Dendritic cell treated with granulocyte-macrophage colony-stimulating factor and Interleukin-4, amounts not matched to agents 40 ng/mL and 50 ng/mL, for 4 days (primary cell): ENCODE measurements at regions of chr6 and their contacts with region 1.

Region 1: DNA sequence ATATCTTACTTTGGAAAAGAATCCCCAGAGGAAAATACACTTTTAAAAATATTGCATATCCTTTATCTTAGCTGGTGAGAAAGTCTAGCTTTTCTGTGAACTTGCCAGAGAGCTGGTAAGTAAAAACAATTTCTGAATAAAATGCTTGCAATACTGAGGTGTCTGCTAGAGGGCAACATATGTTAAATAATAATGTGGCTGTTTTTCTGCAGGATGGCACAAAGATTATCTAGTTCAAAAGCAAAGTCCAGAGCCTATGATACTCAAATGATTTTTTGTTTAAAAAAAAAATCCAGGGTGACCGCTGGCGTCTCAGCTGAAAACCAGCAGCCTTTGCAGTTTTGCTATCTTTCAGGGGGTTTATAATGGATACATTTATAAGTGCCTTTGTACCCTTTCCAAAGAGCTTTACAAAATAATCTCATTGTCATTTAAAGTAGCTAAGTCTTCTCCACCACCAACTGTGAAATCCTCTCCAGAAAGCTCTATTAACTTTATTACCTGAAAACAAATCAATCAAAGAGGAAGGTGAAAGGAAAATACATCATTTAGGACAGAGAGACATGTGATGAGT is 194.9 kb downstream of the PHACTR1 start:
- H3K4me3 Mint-ChIP-seq: no peak overlapping the region
- H3K27ac Mint-ChIP-seq: no peak overlapping the region
- H3K4me1 Mint-ChIP-seq: peaks cover 11% of the 10 kb centered on the region
- H3K27me3 Mint-ChIP-seq: peaks cover 8% of the 10 kb centered on the region

Region 2: DNA sequence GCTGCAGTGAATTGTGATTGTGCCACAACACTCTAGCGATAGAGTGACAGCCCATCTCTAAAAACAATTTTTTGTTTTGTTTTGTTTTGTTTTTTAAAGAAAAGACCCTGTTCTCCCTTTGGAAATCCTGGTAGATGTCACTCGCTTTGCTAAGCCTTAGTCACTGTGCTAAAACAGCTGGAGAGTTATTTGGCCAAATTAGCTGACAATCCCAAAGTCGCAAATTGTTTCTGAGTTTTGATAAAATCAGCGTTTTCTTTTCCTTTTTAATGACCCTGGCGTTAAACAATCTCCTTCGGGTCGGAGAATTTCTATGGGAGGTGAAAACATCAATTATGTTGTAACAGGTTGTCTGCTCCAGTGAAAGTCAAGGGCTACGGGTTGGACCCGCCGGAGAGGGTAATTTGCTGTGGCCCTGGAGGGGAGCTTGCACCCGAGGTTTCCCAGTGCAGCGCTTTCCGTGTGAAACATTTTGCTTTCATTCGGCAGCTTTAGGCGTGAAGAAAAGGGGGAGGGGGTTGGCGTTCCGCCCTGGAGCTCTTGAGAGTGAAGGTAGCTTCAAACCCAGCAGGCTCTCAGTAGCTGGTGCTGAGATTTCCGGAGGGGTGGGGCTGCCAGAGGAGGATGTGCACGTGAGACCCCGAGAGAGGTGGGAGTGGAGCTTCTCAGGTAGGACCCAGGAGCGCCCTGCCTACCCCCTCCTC is 101.7 kb after region 1 on chr6:
- intact Hi-C with region 1: loop called (anchors 10 kb)
- H3K4me3 Mint-ChIP-seq: peak overlapping the region; percentile 86
- H3K27ac Mint-ChIP-seq: peak overlapping the region; percentile 49
- H3K4me1 Mint-ChIP-seq: peaks cover 32% of the 10 kb centered on the region
- H3K27me3 Mint-ChIP-seq: peaks cover 46% of the 10 kb centered on the region

Region 3: DNA sequence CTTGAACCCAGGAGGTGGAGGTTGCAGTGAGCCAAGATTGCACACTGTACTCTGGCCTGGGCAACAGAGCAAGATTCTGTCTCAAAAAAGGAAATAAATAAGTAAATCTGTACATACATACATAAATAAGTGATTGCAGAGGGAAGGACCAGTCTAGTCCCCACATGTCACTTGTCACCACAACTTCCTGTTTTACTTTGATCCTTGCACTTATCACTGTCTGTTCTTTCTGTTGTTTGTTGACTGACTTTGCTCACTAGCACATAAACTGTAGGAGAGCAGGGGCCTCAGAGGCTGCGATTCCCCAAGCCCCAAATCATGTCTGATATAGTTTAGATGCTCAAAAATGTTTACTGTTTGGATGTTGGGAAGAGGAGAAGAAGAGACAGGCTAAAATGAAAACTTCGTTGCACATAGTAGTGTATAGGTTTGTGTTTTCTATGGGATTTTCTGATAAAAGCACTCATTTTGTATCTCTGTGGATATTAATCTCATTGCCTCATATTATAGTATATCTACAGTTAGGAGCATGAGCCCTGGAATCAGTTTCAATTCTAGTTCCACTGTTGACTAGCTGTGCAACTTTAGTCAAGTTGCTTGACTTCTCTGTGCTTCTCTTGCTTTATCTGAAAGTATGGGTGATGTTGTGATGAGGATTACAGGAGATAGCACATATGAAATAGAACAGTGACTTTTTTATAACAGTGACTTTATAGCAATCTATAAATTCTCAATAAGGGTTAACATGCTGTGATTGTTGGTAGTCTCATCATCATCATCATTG is 251.9 kb after region 1 on chr6:
- intact Hi-C with region 1: loop called (anchors 10 kb)
- H3K4me3 Mint-ChIP-seq: no peak overlapping the region
- H3K27ac Mint-ChIP-seq: no peak overlapping the region
- H3K4me1 Mint-ChIP-seq: peaks cover 29% of the 10 kb centered on the region
- H3K27me3 Mint-ChIP-seq: peaks cover 16% of the 10 kb centered on the region